ENCODE measurements at regions of chr3 and their contacts with region 1.

Region 1: DNA sequence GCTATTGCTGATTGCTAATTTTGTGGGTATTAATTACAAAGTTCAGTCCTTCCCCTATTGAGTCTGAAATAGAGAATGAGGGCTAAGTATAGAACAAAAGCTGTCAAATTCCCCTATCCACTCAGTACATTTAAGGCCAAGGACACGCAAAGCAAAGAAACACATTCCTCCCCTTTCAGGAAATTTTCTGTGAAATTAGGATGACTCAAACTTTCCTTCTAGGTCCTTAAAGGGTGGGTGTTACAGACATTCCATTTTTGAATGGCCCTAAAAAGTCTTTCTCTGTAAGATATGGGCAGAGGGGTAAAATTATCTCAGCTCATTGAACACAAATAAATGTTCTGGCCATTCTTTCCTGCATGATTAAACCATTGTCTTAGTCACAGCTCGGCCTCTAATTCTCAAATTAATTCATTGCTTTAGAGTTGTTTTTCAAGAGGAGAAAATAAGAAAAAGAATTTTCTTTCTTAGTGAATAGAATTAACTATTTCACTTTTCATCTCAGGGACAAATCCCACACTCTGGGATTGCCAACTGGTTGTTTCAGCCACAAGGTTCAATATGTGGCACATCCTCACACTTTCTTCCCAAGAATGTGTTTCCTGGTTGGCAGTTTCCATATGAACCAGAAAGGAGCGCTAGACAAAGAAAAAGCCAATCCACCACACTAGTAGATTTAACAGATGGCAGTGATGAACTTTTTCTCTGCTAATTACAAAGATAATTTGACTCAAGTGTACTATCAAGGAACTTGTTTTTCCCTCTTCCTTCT is 424.1 kb downstream of the ZNF385D start:
- DNase-seq: no peak
- ATAC-seq: no peak
- H3K4me3 Mint-ChIP-seq: no peak overlapping the region
- H3K27ac Mint-ChIP-seq: no peak overlapping the region
- H3K4me1 Mint-ChIP-seq: no peaks in the 10 kb centered on the region
- H3K27me3 Mint-ChIP-seq: no peaks in the 10 kb centered on the region

Region 2: GRCh38 chr3:21229426-21230135 is 97.3 kb before region 1 on chr3:
- CTCF ChIA-PET with region 1: no interaction called
- POLR2A ChIA-PET with region 1: no interaction called
- intact Hi-C with region 1: no loop called
- DNase-seq: no peak
- ATAC-seq: no peak
- H3K4me3 Mint-ChIP-seq: no peak overlapping the region
- H3K27ac Mint-ChIP-seq: no peak overlapping the region
- H3K4me1 Mint-ChIP-seq: no peaks in the 10 kb centered on the region
- H3K27me3 Mint-ChIP-seq: no peaks in the 10 kb centered on the region

Region 3: GRCh38 chr3:21356402-21356801 is 29.5 kb after region 1 on chr3:
- CTCF ChIA-PET with region 1: no interaction called
- POLR2A ChIA-PET with region 1: no interaction called
- intact Hi-C with region 1: loop called in 1 of 2 experiments (anchors 1 kb)
- DNase-seq: no peak
- ATAC-seq: peak; percentile 39
- H3K4me3 Mint-ChIP-seq: no peak overlapping the region
- H3K27ac Mint-ChIP-seq: no peak overlapping the region
- H3K4me1 Mint-ChIP-seq: no peaks in the 10 kb centered on the region
- H3K27me3 Mint-ChIP-seq: no peaks in the 10 kb centered on the region

Measured in activated CD4-positive, alpha-beta T cell treated with anti-CD3 and anti-CD28 coated beads for 36 hours (primary cell).